AG04449 (cell line): ENCODE measurements at regions of chr20 and their contacts with region 1.

Region 1: GRCh38 chr20:31849455-31849925 is 4.1 kb upstream of the FOXS1 start:
- DNase-seq: no peak
- H3K4me3 ChIP-seq: no peak overlapping the region
- CTCF ChIP-seq: no peak

Region 2: GRCh38 chr20:31674895-31675827 is 174.3 kb before region 1 on chr20:
- CTCF ChIA-PET with region 1: no interaction called
- POLR2A ChIA-PET with region 1: no interaction called
- DNase-seq: peak; percentile 34
- H3K4me3 ChIP-seq: no peak overlapping the region
- CTCF ChIP-seq: no peak

Region 3: GRCh38 chr20:31811796-31812728 is 37.4 kb before region 1 on chr20:
- CTCF ChIA-PET with region 1: interaction called, 242 read pairs
- POLR2A ChIA-PET with region 1: no interaction called
- DNase-seq: no peak
- H3K4me3 ChIP-seq: no peak overlapping the region
- CTCF ChIP-seq: no peak

Region 4: DNA sequence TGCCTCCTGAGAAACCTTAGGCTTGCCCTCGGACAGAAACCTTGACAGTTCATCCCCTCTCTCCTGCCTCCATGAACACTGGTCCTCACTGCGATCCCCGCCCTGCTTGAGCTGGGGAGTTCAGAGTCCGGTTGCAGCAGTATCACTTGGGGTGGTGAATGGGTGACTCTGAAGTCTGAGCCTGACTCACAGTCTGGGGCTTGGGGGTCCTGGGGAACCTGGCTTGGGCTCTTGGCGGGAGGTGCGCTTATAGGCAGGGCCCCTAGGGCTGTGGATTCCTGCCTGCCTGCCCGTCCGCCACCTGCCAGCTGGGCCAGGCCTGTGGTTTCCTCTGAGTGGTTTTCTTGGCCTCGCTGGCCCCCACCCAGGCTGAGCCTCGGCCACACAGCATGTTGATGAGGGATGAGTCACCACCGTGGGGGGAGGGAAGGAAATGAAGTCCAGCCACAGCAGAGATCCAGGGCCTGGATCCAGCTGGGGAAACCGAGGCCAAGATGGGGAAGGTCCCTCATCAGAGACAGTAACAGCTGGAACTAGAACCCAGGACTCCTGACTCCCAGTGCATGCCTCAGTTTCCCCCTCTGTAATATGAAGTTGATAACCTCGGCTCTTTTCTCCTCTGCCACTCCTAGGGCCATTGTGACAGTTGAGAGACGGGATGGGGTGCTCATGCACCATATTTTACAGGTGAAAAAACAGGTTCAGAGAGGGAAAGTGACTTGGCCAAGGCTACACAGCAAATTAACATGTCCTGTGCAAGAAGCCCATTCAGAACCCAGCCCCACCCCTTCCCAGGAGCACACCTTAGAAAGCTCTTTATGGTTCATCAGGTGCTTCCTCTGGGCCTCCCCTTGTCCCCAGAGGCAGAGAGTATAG is 13.3 kb before region 1 on chr20:
- CTCF ChIA-PET with region 1: interaction called, 113 read pairs
- POLR2A ChIA-PET with region 1: no interaction called
- DNase-seq: no peak
- H3K4me3 ChIP-seq: no peak overlapping the region
- CTCF ChIP-seq: no peak

Region 5: DNA sequence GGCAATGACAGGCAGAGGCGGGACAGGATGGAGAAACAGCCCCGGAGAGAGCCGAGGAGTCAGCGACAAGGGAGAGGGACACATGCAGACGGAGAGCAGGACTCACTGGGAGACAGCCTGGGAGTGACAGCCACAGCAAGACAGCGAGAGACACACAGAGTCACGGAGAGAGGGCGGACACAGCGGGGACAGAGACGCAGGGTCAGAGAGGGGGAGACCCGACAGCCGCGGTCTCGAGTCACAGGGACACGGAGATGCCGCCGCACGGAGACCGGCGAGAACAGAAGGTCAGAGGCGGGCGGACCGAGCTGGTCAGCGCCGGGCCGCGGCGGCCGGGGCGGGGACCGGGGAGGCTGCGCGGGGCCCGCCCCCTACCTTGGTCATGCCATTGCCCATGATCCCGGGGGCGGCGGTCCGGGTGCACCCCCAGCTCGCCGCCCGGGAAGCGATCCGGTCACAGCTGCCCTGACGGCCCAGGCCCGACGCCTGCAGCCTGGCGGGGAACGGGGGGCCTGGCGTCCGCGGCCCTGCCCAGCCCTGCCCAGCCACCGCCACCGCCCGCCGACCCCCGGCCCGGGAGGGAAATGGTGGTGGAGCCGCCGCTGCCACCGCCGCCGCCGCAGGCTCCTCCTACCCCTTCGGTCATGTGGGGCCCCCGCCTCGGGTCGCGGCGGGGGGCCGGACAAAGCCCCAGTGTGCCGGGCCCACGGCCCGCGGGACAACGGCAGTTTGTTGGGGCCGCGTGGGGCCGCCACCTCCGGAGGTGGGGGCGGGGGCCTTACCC is 20.6 kb after region 1 on chr20 and contains the starts of genes DUSP15 and TTLL9:
- CTCF ChIA-PET with region 1: interaction called, 86 read pairs
- POLR2A ChIA-PET with region 1: no interaction called
- DNase-seq: no peak
- H3K4me3 ChIP-seq: peak within 1 kb of the TSS; percentile 27
- CTCF ChIP-seq: no peak

Region 6: DNA sequence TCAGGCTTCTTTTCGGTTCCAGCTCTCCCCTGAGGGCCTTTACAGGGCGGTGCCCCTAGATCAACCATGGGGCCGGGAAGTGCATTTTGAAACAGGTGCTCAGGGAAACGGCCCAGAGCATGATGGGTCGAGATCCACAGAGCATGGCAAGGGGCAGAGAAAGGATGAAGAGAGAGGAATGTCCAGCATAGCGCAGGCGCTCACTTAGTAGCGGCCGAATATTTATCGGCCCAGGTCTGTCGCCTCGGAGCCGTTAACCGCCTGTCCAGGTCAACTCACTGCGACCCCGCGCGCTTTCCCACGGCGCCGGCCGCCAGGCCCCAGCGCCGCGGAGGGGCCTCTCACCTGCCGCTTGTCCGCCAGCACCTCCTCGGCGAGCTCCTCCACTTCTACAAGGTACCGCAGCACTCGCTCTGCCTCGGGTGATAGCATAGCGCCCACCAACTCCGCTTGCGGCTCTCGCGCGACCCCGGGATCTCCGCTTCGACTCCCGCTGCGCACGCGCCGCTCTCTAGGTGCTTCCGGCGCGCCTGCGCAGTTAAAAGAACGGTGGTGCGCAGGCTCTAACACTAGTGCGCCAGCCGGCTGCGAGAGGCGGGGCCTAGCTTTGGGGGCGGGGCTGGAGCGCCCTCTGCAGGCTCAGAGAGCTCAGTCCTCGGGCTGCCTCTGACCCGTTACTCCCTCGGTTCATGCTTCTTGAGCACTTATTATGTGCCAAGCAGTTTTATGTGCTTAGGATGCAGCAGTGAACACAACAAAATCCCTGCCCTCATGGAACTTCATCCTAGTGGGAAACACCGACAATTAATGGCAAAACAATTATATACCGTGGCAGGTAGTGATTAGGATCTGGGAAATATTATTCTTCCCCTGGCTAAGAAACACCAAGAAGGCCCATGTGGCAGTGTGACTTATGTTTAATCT is 102.3 kb after region 1 on chr20 and contains the start of gene PDRG1:
- CTCF ChIA-PET with region 1: interaction called, 97 read pairs
- POLR2A ChIA-PET with region 1: no interaction called
- DNase-seq: peak; percentile 65
- H3K4me3 ChIP-seq: peak within 1 kb of the TSS; percentile 69
- CTCF ChIP-seq: peak; percentile 96